ENCODE measurements at regions of chr9 and their contacts with region 1.

Region 1: DNA sequence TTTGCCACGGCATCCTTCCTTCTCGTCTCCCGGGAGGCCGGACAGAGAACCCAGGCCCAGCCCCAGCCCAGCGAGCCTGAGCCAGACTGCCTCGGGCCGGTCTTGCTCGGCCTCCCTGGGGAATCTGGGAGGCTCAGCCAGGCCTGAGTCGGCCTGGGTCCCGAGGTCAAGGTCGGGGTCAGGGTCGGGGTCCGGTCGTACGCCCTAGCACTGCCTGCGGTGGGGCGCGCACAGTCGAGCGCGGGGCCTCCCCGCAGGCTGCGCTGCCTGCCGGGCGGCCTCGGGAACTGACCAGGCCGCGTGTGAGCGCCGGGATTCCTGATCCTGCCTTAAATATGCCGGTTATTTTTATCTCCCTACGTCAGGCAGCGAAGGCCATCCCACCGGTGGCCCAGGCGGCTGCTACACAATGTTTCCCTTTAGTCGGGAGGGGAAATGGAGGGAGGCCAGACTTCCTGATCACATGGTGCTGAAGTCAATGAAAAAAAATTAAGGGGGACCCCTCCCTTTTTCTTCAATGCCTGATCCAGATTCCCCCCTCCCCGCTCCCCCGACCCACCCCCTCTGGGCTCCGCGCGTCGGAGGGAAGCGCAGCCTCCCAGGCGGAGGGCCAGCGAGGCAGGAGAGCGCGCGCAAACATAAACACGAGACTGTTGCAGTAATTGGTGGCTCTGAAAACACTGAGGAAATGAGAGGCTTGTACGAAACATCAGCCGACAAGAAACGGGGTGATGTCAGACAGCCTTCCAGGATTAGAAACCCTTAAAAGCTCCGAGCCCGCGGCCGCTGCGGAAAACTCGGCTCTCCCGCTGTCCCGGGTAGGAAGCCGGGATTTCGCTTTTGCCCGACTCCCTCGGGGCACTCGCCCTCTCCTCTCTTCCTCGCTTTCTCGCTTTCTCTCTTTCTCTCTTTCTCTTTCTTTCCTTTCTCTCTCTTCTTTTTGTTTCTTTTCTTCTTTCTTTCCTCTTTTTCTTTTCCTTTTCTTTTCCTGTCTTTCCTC is 148.2 kb upstream of the KLF4 start:
- DNase-seq: peak; percentile 94
- ATAC-seq: peak; percentile 94 to 95

Region 2: GRCh38 chr9:107375651-107376369 is 261.9 kb before region 1 on chr9:
- intact Hi-C with region 1: no loop called
- DNase-seq: no peak
- ATAC-seq: peak; percentile 44 to 91

Region 3: GRCh38 chr9:107489687-107490605 is 147.8 kb before region 1 on chr9 and contains the start of gene KLF4:
- intact Hi-C with region 1: loop called in 1 of 2 experiments (anchors 2 kb)
- DNase-seq: peak; percentile 93
- ATAC-seq: peak; percentile 83 to 88
- total RNA-seq, gene KLF4: 45.2 to 66.9 TPM

Region 4: GRCh38 chr9:107665057-107665456 is 27.3 kb after region 1 on chr9:
- intact Hi-C with region 1: loop called in 1 of 2 experiments (anchors 2 kb)
- DNase-seq: no peak
- ATAC-seq: no peak

Region 5: GRCh38 chr9:107749787-107750444 is 112.2 kb after region 1 on chr9:
- intact Hi-C with region 1: loop called in 1 of 2 experiments (anchors 5 kb)
- DNase-seq: peak; percentile 94
- ATAC-seq: peak; percentile 94 to 95

Region 6: GRCh38 chr9:107963246-107963645 is 325.5 kb after region 1 on chr9:
- intact Hi-C with region 1: no loop called
- DNase-seq: no peak
- ATAC-seq: no peak

Measured in left cardiac atrium (tissue), 4 donors.